ENCODE measurements at regions of chr12 and their contacts with region 1.

Region 1: GRCh38 chr12:78530100-78530765 is 334.3 kb upstream of the SYT1 start:
- DNase-seq: no peak
- ATAC-seq: no peak
- H3K4me3 ChIP-seq: no peak overlapping the region
- H3K27ac ChIP-seq: no peak overlapping the region
- H3K4me1 ChIP-seq: no peaks in the 10 kb centered on the region
- H3K27me3 ChIP-seq: no peaks in the 10 kb centered on the region
- CTCF ChIP-seq: no peak

Region 2: DNA sequence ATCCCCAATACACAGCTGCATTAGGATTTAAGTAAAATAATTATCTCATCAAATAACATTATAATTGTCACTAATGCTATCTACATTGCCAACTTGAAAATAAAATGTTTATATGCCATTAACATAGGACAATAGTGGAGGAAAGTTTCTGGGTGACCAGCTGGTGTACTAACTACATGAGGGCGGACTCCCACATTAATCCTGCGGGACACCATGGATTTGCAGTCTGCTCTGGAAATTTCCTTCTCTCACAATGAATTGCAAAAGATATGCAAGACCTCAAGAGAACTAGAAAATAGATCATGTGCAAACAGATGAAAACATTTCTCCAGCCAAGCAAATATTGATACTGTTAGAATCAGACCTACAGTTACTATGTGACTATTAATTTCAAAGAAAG is 309.4 kb before region 1 on chr12:
- intact Hi-C with region 1: no loop called
- DNase-seq: no peak
- ATAC-seq: peak in 1 of 8 donors; percentile 46
- H3K4me3 ChIP-seq: no peak overlapping the region
- H3K27ac ChIP-seq: no peak overlapping the region
- H3K4me1 ChIP-seq: no peaks in the 10 kb centered on the region
- H3K27me3 ChIP-seq: no peaks in the 10 kb centered on the region
- CTCF ChIP-seq: no peak

Region 3: DNA sequence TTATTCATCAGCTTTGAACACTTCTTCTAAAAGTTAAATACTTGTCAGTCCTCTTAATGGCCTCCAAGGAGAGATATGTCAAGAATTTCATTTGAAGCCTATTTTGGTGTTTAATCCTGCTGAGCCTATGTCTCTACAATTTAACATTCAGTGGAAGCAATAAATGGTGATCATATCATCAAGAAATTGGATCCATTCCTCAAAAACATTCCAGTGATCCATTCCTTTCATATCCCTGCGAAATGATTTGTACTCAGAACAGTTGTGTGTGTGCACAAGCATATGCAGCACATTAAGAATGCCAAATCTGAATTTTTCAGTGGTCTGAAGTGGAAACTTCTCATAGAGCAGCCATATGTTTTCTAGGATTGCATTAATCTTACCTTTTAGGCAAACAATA is 39.4 kb before region 1 on chr12:
- intact Hi-C with region 1: loop called in 1 of 10 experiments (anchors 1 kb)
- DNase-seq: no peak
- ATAC-seq: no peak
- H3K4me3 ChIP-seq: no peak overlapping the region
- H3K27ac ChIP-seq: no peak overlapping the region
- H3K4me1 ChIP-seq: no peaks in the 10 kb centered on the region
- H3K27me3 ChIP-seq: no peaks in the 10 kb centered on the region
- CTCF ChIP-seq: no peak

Region 4: GRCh38 chr12:78683031-78683430 is 152.8 kb after region 1 on chr12:
- intact Hi-C with region 1: no loop called
- DNase-seq: no peak
- ATAC-seq: no peak
- H3K4me3 ChIP-seq: no peak overlapping the region
- H3K27ac ChIP-seq: no peak overlapping the region
- H3K4me1 ChIP-seq: no peaks in the 10 kb centered on the region
- H3K27me3 ChIP-seq: no peaks in the 10 kb centered on the region
- CTCF ChIP-seq: no peak

Region 5: GRCh38 chr12:78949532-78949931 is 419.3 kb after region 1 on chr12:
- intact Hi-C with region 1: no loop called
- DNase-seq: no peak
- ATAC-seq: no peak
- H3K4me3 ChIP-seq: no peak overlapping the region
- H3K27ac ChIP-seq: no peak overlapping the region
- H3K4me1 ChIP-seq: no peaks in the 10 kb centered on the region
- H3K27me3 ChIP-seq: no peaks in the 10 kb centered on the region
- CTCF ChIP-seq: no peak